B cell (primary cell): ENCODE measurements at regions of chr3 and their contacts with region 1.

Region 1: GRCh38 chr3:48556793-48557626 is at the start of gene PFKFB4:
- DNase-seq: peak; percentile 100
- ATAC-seq: peak; percentile 89
- H3K4me3 ChIP-seq: peak within 1 kb of the TSS; percentile 53 to 73 (median 63)
- H3K4me3 Mint-ChIP-seq: peak within 1 kb of the TSS; percentile 87
- H3K27ac ChIP-seq: peak within 1 kb of the TSS; percentile 41 to 65
- H3K27ac Mint-ChIP-seq: peak within 1 kb of the TSS; percentile 80
- H3K4me1 ChIP-seq: peaks cover 16 to 40% of the 10 kb centered on the region in 2 donors
- H3K4me1 Mint-ChIP-seq: peaks cover 33% of the 10 kb centered on the region
- H3K27me3 ChIP-seq: no peaks in the 10 kb centered on the region
- H3K27me3 Mint-ChIP-seq: no peaks in the 10 kb centered on the region
- CTCF ChIP-seq: no peak
- total RNA-seq, gene PFKFB4: 3.2 and 3.3 TPM in 2 replicates

Region 2: DNA sequence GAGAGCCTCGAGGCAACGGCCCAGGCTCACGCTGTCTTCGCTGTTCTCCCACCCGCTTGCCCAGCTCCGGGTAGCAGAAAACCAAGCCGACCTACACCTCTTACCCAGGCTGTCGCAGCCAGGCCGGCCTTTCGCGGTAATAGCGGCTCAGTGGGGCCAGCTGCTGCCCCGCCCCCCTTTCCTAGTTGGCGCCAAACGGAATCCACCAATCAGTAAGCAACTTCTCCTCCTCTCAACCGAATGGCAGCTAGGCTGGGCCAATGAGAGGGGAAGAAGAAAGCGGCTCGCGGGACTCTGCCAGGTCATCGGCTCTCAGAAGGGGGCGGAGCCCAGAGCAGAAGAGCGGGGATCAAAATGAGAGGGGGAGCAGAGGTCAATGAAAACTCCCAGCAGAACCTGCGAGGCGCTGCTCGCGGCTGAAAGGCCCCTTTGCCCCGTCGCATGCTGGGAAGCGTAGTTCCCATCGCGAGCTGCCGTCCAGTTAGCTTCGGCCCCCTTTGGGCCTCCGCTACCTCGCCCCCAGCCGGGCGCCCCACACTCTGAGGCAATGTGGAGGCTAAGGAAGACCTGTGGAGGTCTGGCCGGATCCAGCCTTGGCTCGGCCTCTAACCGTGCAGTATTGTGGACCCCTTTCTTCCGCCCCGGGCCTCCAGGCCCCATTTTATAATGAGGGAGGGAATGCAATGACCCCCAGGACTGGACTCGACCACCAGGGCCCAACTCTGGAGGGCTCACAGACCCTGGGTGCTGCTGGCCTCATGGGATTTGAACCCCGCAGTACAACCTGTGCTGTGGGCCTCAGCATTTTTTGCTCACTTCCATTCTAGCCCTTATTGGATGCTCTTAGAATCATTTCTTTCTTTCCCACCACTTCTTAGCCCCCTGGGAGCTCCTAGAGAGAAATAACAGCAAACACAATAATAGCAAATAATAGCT is 368.5 kb before region 1 on chr3 and contains the start of gene CDC25A:
- CTCF ChIA-PET with region 1: no interaction called
- POLR2A ChIA-PET with region 1: no interaction called
- intact Hi-C with region 1: loop called (anchors 5 kb)
- DNase-seq: peak; percentile 97
- ATAC-seq: peak; percentile 99
- H3K4me3 ChIP-seq: peak within 1 kb of the TSS; percentile 51 to 96 (median 76)
- H3K4me3 Mint-ChIP-seq: peak within 1 kb of the TSS; percentile 94
- H3K27ac ChIP-seq: peak within 1 kb of the TSS; percentile 38 to 71
- H3K27ac Mint-ChIP-seq: peak within 1 kb of the TSS; percentile 84
- H3K4me1 ChIP-seq: peaks cover 12 to 15% of the 10 kb centered on the region in 2 donors
- H3K4me1 Mint-ChIP-seq: peaks cover 15% of the 10 kb centered on the region
- H3K27me3 ChIP-seq: peaks cover 0 to 19% (median 8%) of the 10 kb centered on the region in 4 experiments
- H3K27me3 Mint-ChIP-seq: peaks cover 17% of the 10 kb centered on the region
- CTCF ChIP-seq: no peak
- total RNA-seq, gene CDC25A: 0.07 and 0.53 TPM in 2 replicates

Region 3: GRCh38 chr3:48301020-48301796 is 255.8 kb before region 1 on chr3:
- CTCF ChIA-PET with region 1: no interaction called
- POLR2A ChIA-PET with region 1: interaction called, 3 read pairs
- intact Hi-C with region 1: loop called (anchors 2 kb)
- DNase-seq: peak; percentile 94
- ATAC-seq: peak; percentile 91
- H3K4me3 ChIP-seq: peak within 1 kb of the TSS; percentile 41 to 90 (median 82)
- H3K4me3 Mint-ChIP-seq: peak within 1 kb of the TSS; percentile 97
- H3K27ac ChIP-seq: peak within 1 kb of the TSS; percentile 92 to 96
- H3K27ac Mint-ChIP-seq: peak within 1 kb of the TSS; percentile 99
- H3K4me1 ChIP-seq: peaks cover 17 to 25% of the 10 kb centered on the region in 2 donors
- H3K4me1 Mint-ChIP-seq: peaks cover 55% of the 10 kb centered on the region
- H3K27me3 ChIP-seq: no peaks in the 10 kb centered on the region
- H3K27me3 Mint-ChIP-seq: no peaks in the 10 kb centered on the region
- CTCF ChIP-seq: no peak

Region 4: DNA sequence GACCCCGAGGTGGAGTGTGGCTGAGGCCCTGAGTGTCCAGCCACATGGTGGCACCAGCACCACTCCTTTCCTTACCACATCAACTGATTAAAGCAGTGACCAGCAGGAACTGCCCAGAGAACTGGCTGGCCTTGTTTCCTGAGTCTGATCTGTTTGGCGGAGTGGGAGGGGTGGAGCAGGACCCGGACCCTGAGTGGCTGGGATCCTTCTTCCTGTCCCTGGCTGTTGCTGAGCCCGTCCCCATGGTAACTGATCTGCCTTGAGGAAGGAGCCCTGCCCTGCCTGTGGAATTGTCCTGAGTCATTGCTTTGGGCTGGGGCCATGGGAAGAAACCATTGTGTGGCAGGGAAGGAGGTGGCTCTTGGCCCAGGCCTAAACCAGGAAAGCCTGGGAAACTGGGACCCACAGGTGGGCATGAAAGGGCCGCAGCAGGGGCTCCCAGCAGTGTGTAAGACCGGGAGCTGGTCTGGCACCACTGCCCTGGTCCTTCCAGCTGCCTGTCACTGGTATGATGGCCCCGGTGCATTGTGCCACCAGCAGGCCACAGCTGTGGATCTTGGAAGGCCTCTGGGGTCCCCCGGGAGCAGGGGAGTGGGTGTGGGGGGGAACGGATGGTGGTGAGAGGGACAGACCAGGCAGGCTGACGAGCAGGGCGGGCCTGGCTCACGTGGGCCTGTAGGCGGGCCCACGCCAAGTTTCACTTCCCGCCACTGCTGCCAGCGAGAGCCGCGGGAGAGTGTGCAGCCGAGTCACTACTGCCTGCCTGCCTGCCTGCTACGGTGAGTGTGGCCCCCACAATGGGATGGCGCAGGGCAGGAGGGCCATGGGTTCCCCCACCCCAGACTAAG is 91.3 kb before region 1 on chr3:
- CTCF ChIA-PET with region 1: interaction called, 9 read pairs
- POLR2A ChIA-PET with region 1: interaction called, 4 read pairs
- intact Hi-C with region 1: loop called (anchors 1 kb)
- DNase-seq: peak; percentile 91
- ATAC-seq: peak; percentile 93
- H3K4me3 ChIP-seq: peak overlapping the region; percentile 31 to 92 (median 88)
- H3K4me3 Mint-ChIP-seq: peak overlapping the region; percentile 94
- H3K27ac ChIP-seq: peak overlapping the region; percentile 96 to 99
- H3K27ac Mint-ChIP-seq: peak overlapping the region; percentile 94
- H3K4me1 ChIP-seq: peaks cover 50 to 53% of the 10 kb centered on the region in 2 donors
- H3K4me1 Mint-ChIP-seq: peaks cover 52% of the 10 kb centered on the region
- H3K27me3 ChIP-seq: no peaks in the 10 kb centered on the region
- H3K27me3 Mint-ChIP-seq: no peaks in the 10 kb centered on the region
- CTCF ChIP-seq: peak; percentile 24

Region 5: DNA sequence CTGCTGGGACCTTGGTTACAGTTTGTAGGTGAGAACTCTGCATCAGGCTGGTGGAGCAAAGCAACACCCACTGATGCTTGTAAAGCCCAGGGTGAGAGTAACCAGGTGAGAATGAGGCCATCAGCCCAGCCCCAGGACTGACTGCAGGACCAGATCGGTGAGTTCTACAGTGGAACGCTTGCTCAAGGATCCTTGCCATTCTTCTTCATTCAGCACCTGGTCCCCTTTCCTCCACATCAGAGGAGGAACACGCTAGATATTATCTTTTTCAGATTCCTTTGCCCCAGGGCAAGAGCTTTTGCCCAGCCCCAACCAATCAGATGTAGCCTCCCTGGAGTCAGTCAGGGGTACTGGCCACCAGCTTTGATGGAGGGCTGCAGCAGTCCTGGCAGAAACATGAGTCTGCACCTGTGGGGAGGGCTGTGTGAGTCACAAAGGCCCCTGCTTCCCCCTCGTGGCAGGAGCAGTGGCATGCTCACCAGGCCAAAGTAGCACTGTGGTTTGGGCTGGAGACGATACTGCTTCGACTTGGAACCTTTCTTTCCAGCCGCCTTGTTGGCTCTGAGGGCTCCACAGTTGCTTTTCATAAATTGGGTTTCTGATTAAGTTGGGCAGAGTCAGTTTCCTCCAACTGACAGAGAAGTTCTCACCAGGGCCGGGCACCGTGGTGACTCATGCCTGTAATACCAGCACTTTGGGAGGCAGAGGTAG is 49.5 kb before region 1 on chr3:
- CTCF ChIA-PET with region 1: interaction called, 3 read pairs
- POLR2A ChIA-PET with region 1: interaction called, 4 read pairs
- intact Hi-C with region 1: loop called (anchors 2 kb)
- DNase-seq: peak; percentile 83
- ATAC-seq: peak; percentile 87
- H3K4me3 ChIP-seq: no peak overlapping the region
- H3K4me3 Mint-ChIP-seq: peak overlapping the region; percentile 32
- H3K27ac ChIP-seq: no peak overlapping the region
- H3K27ac Mint-ChIP-seq: peak overlapping the region; percentile 65
- H3K4me1 ChIP-seq: peaks cover 14 to 25% of the 10 kb centered on the region in 2 donors
- H3K4me1 Mint-ChIP-seq: peaks cover 23% of the 10 kb centered on the region
- H3K27me3 ChIP-seq: peaks cover 0 to 2% (median 0%) of the 10 kb centered on the region in 4 experiments
- H3K27me3 Mint-ChIP-seq: peaks cover 3% of the 10 kb centered on the region
- CTCF ChIP-seq: peak; percentile 84

Region 6: DNA sequence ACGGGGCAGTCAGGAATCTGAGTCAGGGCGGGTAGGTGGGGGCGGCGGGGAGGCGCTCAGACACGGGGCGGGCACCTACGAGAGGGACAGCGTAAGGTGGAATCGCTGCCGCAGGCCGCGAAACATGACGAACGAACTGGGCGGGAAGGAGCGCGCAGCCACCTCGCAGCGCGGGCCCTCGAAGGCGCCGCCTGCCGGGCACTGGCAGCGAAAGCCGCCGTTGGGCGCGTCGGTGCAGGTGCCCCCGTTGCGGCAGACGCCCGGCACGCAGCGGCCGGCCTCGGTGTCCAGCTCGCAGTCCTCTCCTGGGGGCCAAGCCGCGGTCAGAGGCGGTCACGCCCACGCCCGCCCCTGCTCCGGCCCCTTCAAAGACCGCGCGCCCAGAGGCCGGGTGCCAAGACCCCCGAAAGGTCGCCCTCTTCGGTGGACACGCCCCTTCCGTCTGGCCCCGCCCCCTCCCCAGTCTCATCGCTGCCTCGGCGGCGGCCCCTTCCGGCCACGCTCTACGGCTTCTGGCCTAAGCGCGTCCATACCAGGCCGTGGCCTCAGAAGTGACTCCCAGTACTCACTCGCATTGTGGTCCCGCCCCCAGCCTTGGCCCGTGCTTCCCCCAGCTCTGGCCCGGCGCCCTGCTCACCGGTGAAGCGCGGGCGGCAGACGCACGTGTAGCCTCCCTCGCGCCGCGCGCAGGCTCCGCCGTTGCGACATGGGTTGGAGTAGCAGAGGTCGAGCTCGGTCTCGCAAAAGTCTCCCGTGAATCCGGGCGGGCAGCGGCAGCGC is 99.2 kb after region 1 on chr3:
- CTCF ChIA-PET with region 1: interaction called, 3 read pairs
- POLR2A ChIA-PET with region 1: no interaction called
- intact Hi-C with region 1: loop called (anchors 1 kb)
- DNase-seq: peak; percentile 89
- ATAC-seq: peak; percentile 79
- H3K4me3 ChIP-seq: peak overlapping the region in 4 of 5 experiments; percentile 44 to 66 (median 62)
- H3K4me3 Mint-ChIP-seq: peak overlapping the region; percentile 83
- H3K27ac ChIP-seq: peak overlapping the region in 1 of 2 donors; percentile 24
- H3K27ac Mint-ChIP-seq: peak overlapping the region; percentile 73
- H3K4me1 ChIP-seq: peaks cover 9 to 22% of the 10 kb centered on the region in 2 donors
- H3K4me1 Mint-ChIP-seq: peaks cover 17% of the 10 kb centered on the region
- H3K27me3 ChIP-seq: peaks cover 0 to 42% (median 6%) of the 10 kb centered on the region in 4 experiments
- H3K27me3 Mint-ChIP-seq: peaks cover 9% of the 10 kb centered on the region
- CTCF ChIP-seq: peak; percentile 83

Region 7: GRCh38 chr3:49021813-49022687 is 465.0 kb after region 1 on chr3 and contains the start of gene NDUFAF3:
- CTCF ChIA-PET with region 1: no interaction called
- POLR2A ChIA-PET with region 1: no interaction called
- intact Hi-C with region 1: loop called (anchors 5 kb)
- DNase-seq: peak; percentile 96
- ATAC-seq: peak; percentile 66
- H3K4me3 ChIP-seq: peak within 1 kb of the TSS; percentile 66 to 92 (median 89)
- H3K4me3 Mint-ChIP-seq: peak within 1 kb of the TSS; percentile 96
- H3K27ac ChIP-seq: peak within 1 kb of the TSS; percentile 96 to 98
- H3K27ac Mint-ChIP-seq: peak within 1 kb of the TSS; percentile 97
- H3K4me1 ChIP-seq: peaks cover 36 to 60% of the 10 kb centered on the region in 2 donors
- H3K4me1 Mint-ChIP-seq: peaks cover 65% of the 10 kb centered on the region
- H3K27me3 ChIP-seq: no peaks in the 10 kb centered on the region
- H3K27me3 Mint-ChIP-seq: no peaks in the 10 kb centered on the region
- CTCF ChIP-seq: peak; percentile 95
- total RNA-seq, gene NDUFAF3: 67.0 and 67.5 TPM in 2 replicates